ENCODE measurements at regions of chr1 and their contacts with region 1.

Region 1: GRCh38 chr1:231421993-231422764 is at the start of gene EGLN1:
- DNase-seq: peak; percentile 65 to 92 (median 80)
- ATAC-seq: peak; percentile 83
- H3K4me3 ChIP-seq: peak within 1 kb of the TSS; percentile 83
- H3K4me3 Mint-ChIP-seq: peak within 1 kb of the TSS; percentile 90
- H3K27ac ChIP-seq: peak within 1 kb of the TSS; percentile 36 to 83
- H3K27ac Mint-ChIP-seq: peak within 1 kb of the TSS; percentile 87
- H3K4me1 ChIP-seq: peaks cover 21% of the 10 kb centered on the region
- H3K4me1 Mint-ChIP-seq: peaks cover 49% of the 10 kb centered on the region
- H3K27me3 ChIP-seq: no peaks in the 10 kb centered on the region
- H3K27me3 Mint-ChIP-seq: no peaks in the 10 kb centered on the region
- CTCF ChIP-seq: peak; percentile 51
- total RNA-seq, gene EGLN1: 8.2 to 9.4 TPM

Region 2: GRCh38 chr1:230867903-230868735 is 554.1 kb before region 1 on chr1 and contains the start of gene C1orf198:
- CTCF ChIA-PET with region 1: no interaction called
- POLR2A ChIA-PET with region 1: no interaction called
- intact Hi-C with region 1: loop called in 1 of 2 experiments (anchors 10 kb)
- DNase-seq: peak; percentile 57 to 86 (median 72)
- ATAC-seq: peak; percentile 92
- H3K4me3 ChIP-seq: peak within 1 kb of the TSS; percentile 64
- H3K4me3 Mint-ChIP-seq: peak within 1 kb of the TSS; percentile 93
- H3K27ac ChIP-seq: no peak within 1 kb of the TSS
- H3K27ac Mint-ChIP-seq: no peak within 1 kb of the TSS
- H3K4me1 ChIP-seq: peaks cover 20% of the 10 kb centered on the region
- H3K4me1 Mint-ChIP-seq: peaks cover 19% of the 10 kb centered on the region
- H3K27me3 ChIP-seq: peaks cover 17 to 21% of the 10 kb centered on the region in 2 experiments
- H3K27me3 Mint-ChIP-seq: peaks cover 20% of the 10 kb centered on the region
- CTCF ChIP-seq: no peak
- total RNA-seq, gene C1orf198: 2.2 TPM

Region 3: GRCh38 chr1:231091831-231092301 is 330.3 kb before region 1 on chr1:
- CTCF ChIA-PET with region 1: no interaction called
- POLR2A ChIA-PET with region 1: no interaction called
- intact Hi-C with region 1: no loop called
- DNase-seq: peak in 13 of 14 experiments; percentile 11 to 64 (median 25)
- ATAC-seq: no peak
- H3K4me3 ChIP-seq: no peak overlapping the region
- H3K4me3 Mint-ChIP-seq: no peak overlapping the region
- H3K27ac ChIP-seq: no peak overlapping the region
- H3K27ac Mint-ChIP-seq: no peak overlapping the region
- H3K4me1 ChIP-seq: no peaks in the 10 kb centered on the region
- H3K4me1 Mint-ChIP-seq: no peaks in the 10 kb centered on the region
- H3K27me3 ChIP-seq: peaks cover 7 to 8% of the 10 kb centered on the region in 2 experiments
- H3K27me3 Mint-ChIP-seq: peaks cover 41% of the 10 kb centered on the region
- CTCF ChIP-seq: peak; percentile 44

Region 4: GRCh38 chr1:231337472-231338269 is 84.5 kb before region 1 on chr1 and contains the start of gene EXOC8:
- CTCF ChIA-PET with region 1: no interaction called
- POLR2A ChIA-PET with region 1: interaction called, 56 read pairs
- intact Hi-C with region 1: loop called (anchors 1 to 5 kb)
- DNase-seq: peak; percentile 95 to 99 (median 96)
- ATAC-seq: peak; percentile 75
- H3K4me3 ChIP-seq: peak within 1 kb of the TSS; percentile 97
- H3K4me3 Mint-ChIP-seq: peak within 1 kb of the TSS; percentile 99
- H3K27ac ChIP-seq: peak within 1 kb of the TSS; percentile 98 to 100
- H3K27ac Mint-ChIP-seq: peak within 1 kb of the TSS; percentile 100
- H3K4me1 ChIP-seq: peaks cover 47% of the 10 kb centered on the region
- H3K4me1 Mint-ChIP-seq: peaks cover 76% of the 10 kb centered on the region
- H3K27me3 ChIP-seq: no peaks in the 10 kb centered on the region
- H3K27me3 Mint-ChIP-seq: peaks cover 5% of the 10 kb centered on the region
- CTCF ChIP-seq: peak; percentile 33
- total RNA-seq, gene EXOC8: 28.0 to 31.9 TPM

Region 5: DNA sequence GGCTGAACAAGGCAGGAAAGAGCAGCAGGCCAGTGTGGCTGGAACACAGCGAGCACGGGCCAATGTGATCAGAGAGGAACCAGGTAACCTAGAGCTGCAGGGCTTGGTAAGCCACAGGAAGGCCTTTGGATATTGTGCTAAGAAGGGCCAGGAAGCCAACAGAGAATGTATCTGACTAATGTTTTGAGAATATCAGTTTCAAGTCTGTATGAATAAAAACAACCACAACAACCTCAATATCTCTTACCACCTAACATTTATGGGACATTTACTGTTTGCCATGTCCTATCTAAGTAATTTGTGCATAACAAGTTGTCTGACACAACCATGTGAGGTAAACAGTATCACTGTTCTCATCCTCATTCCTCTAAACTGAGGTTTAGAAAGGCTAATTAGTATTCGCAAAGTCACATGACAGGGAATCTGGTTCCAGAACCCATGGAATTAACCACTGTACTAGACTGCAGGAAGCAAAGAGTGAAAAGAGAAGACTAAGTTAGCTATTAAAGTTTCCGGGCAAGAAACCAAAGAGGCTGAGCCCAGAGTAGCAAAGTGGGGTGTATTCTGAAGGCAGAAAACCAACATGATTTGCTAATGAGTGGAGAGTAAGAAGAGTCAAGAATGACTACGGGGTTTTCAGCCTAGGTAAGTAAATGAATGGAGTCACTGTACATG is 45.2 kb before region 1 on chr1:
- CTCF ChIA-PET with region 1: no interaction called
- POLR2A ChIA-PET with region 1: interaction called, 4 read pairs
- intact Hi-C with region 1: loop called in 1 of 2 experiments (anchors 10 kb)
- DNase-seq: peak in 1 of 14 experiments; percentile 9
- ATAC-seq: peak; percentile 60
- H3K4me3 ChIP-seq: no peak overlapping the region
- H3K4me3 Mint-ChIP-seq: no peak overlapping the region
- H3K27ac ChIP-seq: no peak overlapping the region
- H3K27ac Mint-ChIP-seq: peak overlapping the region; percentile 30
- H3K4me1 ChIP-seq: peaks cover 5% of the 10 kb centered on the region
- H3K4me1 Mint-ChIP-seq: peaks cover 57% of the 10 kb centered on the region
- H3K27me3 ChIP-seq: no peaks in the 10 kb centered on the region
- H3K27me3 Mint-ChIP-seq: no peaks in the 10 kb centered on the region
- CTCF ChIP-seq: no peak

Region 6: DNA sequence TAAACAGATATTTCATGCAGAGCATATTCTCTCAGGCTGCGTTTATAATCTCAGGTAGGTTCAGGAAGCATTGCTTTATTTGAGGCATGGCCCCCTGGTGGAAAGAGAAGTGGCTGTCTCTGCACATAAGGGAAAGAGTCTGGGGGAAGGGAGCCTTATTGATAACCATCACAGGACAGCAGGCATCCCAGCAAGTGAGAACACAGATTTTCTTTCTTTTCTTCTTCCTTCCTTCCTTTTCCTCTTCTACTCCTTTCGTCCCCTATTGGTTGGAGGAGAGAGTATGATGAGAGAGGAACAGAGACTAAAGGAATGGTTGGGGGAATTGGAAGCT is 128.2 kb after region 1 on chr1:
- CTCF ChIA-PET with region 1: no interaction called
- POLR2A ChIA-PET with region 1: no interaction called
- intact Hi-C with region 1: loop called in 1 of 2 experiments (anchors 1 kb)
- DNase-seq: peak in 7 of 14 experiments; percentile 3 to 62 (median 27)
- ATAC-seq: peak; percentile 71
- H3K4me3 ChIP-seq: no peak overlapping the region
- H3K4me3 Mint-ChIP-seq: no peak overlapping the region
- H3K27ac ChIP-seq: no peak overlapping the region
- H3K27ac Mint-ChIP-seq: no peak overlapping the region
- H3K4me1 ChIP-seq: no peaks in the 10 kb centered on the region
- H3K4me1 Mint-ChIP-seq: peaks cover 36% of the 10 kb centered on the region
- H3K27me3 ChIP-seq: no peaks in the 10 kb centered on the region
- H3K27me3 Mint-ChIP-seq: no peaks in the 10 kb centered on the region
- CTCF ChIP-seq: peak; percentile 53

Region 7: GRCh38 chr1:231603598-231604275 is 181.6 kb after region 1 on chr1:
- CTCF ChIA-PET with region 1: no interaction called
- POLR2A ChIA-PET with region 1: no interaction called
- intact Hi-C with region 1: loop called (anchors 1 to 10 kb)
- DNase-seq: peak in 10 of 14 experiments; percentile 3 to 75 (median 34)
- ATAC-seq: peak; percentile 93
- H3K4me3 ChIP-seq: peak overlapping the region; percentile 57
- H3K4me3 Mint-ChIP-seq: peak overlapping the region; percentile 91
- H3K27ac ChIP-seq: peak overlapping the region in 1 of 2 donors; percentile 2
- H3K27ac Mint-ChIP-seq: peak overlapping the region; percentile 68
- H3K4me1 ChIP-seq: peaks cover 4% of the 10 kb centered on the region
- H3K4me1 Mint-ChIP-seq: peaks cover 10% of the 10 kb centered on the region
- H3K27me3 ChIP-seq: no peaks in the 10 kb centered on the region
- H3K27me3 Mint-ChIP-seq: no peaks in the 10 kb centered on the region
- CTCF ChIP-seq: peak; percentile 84

Measured in CD4-positive, alpha-beta T cell (primary cell).